ENCODE measurements at regions of chr21 and their contacts with region 1.

Region 1: GRCh38 chr21:37366482-37367316 is at the start of gene DYRK1A:
- DNase-seq: peak; percentile 97
- H3K4me3 Mint-ChIP-seq: peak within 1 kb of the TSS; percentile 95
- H3K27ac Mint-ChIP-seq: peak within 1 kb of the TSS; percentile 99
- H3K4me1 Mint-ChIP-seq: peaks cover 38% of the 10 kb centered on the region
- H3K27me3 Mint-ChIP-seq: no peaks in the 10 kb centered on the region
- total RNA-seq, gene DYRK1A: 61.8 and 62.5 TPM in 2 replicates

Region 2: GRCh38 chr21:36156339-36156814 is 1210.3 kb before region 1 on chr21:
- intact Hi-C with region 1: loop called (anchors 10 kb)
- DNase-seq: peak; percentile 98
- H3K4me3 Mint-ChIP-seq: peak overlapping the region; percentile 76
- H3K27ac Mint-ChIP-seq: no peak overlapping the region
- H3K4me1 Mint-ChIP-seq: peaks cover 17% of the 10 kb centered on the region
- H3K27me3 Mint-ChIP-seq: no peaks in the 10 kb centered on the region

Region 3: GRCh38 chr21:37072988-37073416 is 293.7 kb before region 1 on chr21 and contains the starts of genes PIGP and TTC3:
- intact Hi-C with region 1: loop called (anchors 1 kb)
- DNase-seq: peak; percentile 93
- H3K4me3 Mint-ChIP-seq: peak within 1 kb of the TSS; percentile 90
- H3K27ac Mint-ChIP-seq: peak within 1 kb of the TSS; percentile 89
- H3K4me1 Mint-ChIP-seq: peaks cover 48% of the 10 kb centered on the region
- H3K27me3 Mint-ChIP-seq: no peaks in the 10 kb centered on the region
- total RNA-seq, gene PIGP: 20.6 and 23.7 TPM in 2 replicates
- total RNA-seq, gene TTC3: 60.9 and 66.8 TPM in 2 replicates

Region 4: DNA sequence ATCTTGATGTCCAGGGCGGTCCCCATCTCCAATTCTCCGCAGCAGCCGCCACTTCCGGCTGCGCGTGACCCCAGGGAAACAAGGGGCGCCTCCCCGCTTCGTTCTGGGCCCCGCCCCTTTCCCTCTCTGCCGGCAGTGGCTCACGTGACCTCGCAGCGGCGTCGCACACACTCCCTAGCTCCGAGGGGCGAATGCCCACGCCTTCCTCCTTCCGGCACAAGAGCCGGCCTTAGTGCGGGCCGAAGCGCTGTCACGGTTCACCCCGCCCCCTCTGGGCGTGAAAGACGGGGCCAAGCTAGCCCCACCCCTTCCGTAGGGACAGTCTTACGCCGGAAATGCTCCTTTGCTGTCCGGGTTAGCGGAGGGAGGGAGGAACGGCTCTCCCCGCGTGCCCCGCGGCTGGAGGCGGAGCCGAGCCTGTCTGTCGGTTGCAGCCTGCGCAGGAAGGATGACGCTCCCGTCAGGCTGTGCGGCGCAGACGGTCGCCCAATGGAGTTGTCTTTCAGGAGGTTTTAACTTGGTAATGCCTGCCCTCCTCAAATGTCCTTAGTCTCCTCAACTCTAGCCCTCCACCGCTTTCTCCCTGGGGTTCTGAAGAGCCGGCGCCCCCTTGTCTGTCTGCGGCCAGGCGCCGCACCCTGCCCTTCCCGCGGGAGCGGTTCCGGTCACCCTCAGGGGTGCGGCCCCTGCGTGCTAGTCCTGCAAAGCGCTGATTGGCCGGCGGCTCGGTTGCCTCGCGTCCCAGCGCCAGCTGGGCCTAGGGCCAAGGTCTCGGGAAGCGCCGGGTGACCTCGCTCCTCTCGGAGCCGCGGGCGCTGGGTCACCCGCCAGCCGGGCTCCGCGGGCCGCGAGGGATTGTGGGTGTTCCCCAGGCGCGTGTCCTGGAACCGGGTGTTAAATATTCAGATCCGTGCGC is 99.2 kb before region 1 on chr21 and contains the start of gene VPS26C:
- intact Hi-C with region 1: loop called (anchors 1 kb)
- DNase-seq: peak; percentile 99
- H3K4me3 Mint-ChIP-seq: peak within 1 kb of the TSS; percentile 96
- H3K27ac Mint-ChIP-seq: peak within 1 kb of the TSS; percentile 97
- H3K4me1 Mint-ChIP-seq: peaks cover 30% of the 10 kb centered on the region
- H3K27me3 Mint-ChIP-seq: peaks cover 2% of the 10 kb centered on the region
- total RNA-seq, gene VPS26C: 58.0 and 59.4 TPM in 2 replicates

Region 5: GRCh38 chr21:37463083-37463801 is 96.5 kb after region 1 on chr21:
- intact Hi-C with region 1: loop called (anchors 2 kb)
- DNase-seq: no peak
- H3K4me3 Mint-ChIP-seq: no peak overlapping the region
- H3K27ac Mint-ChIP-seq: peak overlapping the region; percentile 48
- H3K4me1 Mint-ChIP-seq: peaks cover 54% of the 10 kb centered on the region
- H3K27me3 Mint-ChIP-seq: no peaks in the 10 kb centered on the region

Region 6: GRCh38 chr21:39183237-39184007 is 1816.7 kb after region 1 on chr21 and contains the start of gene PSMG1:
- intact Hi-C with region 1: loop called (anchors 5 kb)
- DNase-seq: peak; percentile 92
- H3K4me3 Mint-ChIP-seq: peak within 1 kb of the TSS; percentile 99
- H3K27ac Mint-ChIP-seq: peak within 1 kb of the TSS; percentile 98
- H3K4me1 Mint-ChIP-seq: peaks cover 57% of the 10 kb centered on the region
- H3K27me3 Mint-ChIP-seq: no peaks in the 10 kb centered on the region
- total RNA-seq, gene PSMG1: 79.7 and 85.2 TPM in 2 replicates

Measured in activated T-helper 2 cell treated with anti-CD3 and anti-CD28 coated beads, Interferon-gamma antibody, Interleukin-2, Interleukin-4, amounts not matched to agents 10 μg/mL and 5 μg/mL and 100 μg/mL, durations not matched to agents 14 hours and 24 hours and 36 hours (primary cell).